Activated B cell treated with CpG ODN at 0.5 μM for 24 hours (primary cell): ENCODE measurements at regions of chr6 and their contacts with region 1.

Region 1: GRCh38 chr6:116100419-116101301 is at the start of gene NT5DC1:
- DNase-seq: peak; percentile 86
- ATAC-seq: peak; percentile 92
- H3K4me3 Mint-ChIP-seq: peak within 1 kb of the TSS; percentile 88
- H3K27ac Mint-ChIP-seq: peak within 1 kb of the TSS; percentile 92
- H3K4me1 Mint-ChIP-seq: peaks cover 52% of the 10 kb centered on the region
- H3K27me3 Mint-ChIP-seq: no peaks in the 10 kb centered on the region
- CTCF ChIP-seq: no peak
- total RNA-seq, gene NT5DC1: 59.9 and 61.6 TPM in 2 replicates

Region 2: DNA sequence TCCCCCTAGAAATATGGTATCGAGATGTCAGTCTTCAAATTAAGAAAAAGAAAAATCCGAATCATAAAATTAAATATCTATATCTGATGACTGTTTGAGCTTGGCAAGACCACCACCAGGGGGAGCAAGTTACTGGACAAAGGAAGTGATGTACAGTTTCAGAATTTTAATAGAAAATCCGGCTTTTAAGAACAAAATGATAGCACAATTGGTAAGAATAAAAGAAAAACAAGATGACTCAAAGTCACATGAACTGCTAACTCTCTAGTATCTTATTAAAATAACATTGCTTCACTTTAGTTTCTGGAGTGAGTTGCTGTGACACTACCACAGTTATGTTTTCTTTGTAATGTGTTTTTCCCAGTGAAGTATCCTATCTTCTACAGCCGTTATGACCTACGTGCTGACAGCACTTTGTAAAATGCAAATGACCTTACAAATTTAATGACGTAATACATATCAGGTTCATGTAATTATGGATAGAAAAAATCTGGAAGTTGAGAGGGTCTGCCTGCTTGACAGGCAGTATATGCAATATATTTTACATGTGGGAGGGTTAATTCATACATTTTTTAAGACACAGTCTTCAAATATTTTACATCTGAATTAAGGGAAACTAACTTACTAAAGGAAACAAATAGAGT is 1352.6 kb before region 1 on chr6:
- CTCF ChIA-PET with region 1: interaction called, 3 read pairs
- POLR2A ChIA-PET with region 1: no interaction called
- intact Hi-C with region 1: loop called (anchors 2 kb)
- DNase-seq: no peak
- ATAC-seq: no peak
- H3K4me3 Mint-ChIP-seq: no peak overlapping the region
- H3K27ac Mint-ChIP-seq: no peak overlapping the region
- H3K4me1 Mint-ChIP-seq: no peaks in the 10 kb centered on the region
- H3K27me3 Mint-ChIP-seq: no peaks in the 10 kb centered on the region
- CTCF ChIP-seq: no peak

Region 3: GRCh38 chr6:116010790-116011401 is 89.8 kb before region 1 on chr6:
- CTCF ChIA-PET with region 1: interaction called, 142 read pairs
- POLR2A ChIA-PET with region 1: interaction called, 29 read pairs
- intact Hi-C with region 1: loop called (anchors 1 kb)
- DNase-seq: peak; percentile 29
- ATAC-seq: peak; percentile 64
- H3K4me3 Mint-ChIP-seq: no peak overlapping the region
- H3K27ac Mint-ChIP-seq: no peak overlapping the region
- H3K4me1 Mint-ChIP-seq: peaks cover 32% of the 10 kb centered on the region
- H3K27me3 Mint-ChIP-seq: peaks cover 2% of the 10 kb centered on the region
- CTCF ChIP-seq: peak; percentile 45

Region 4: DNA sequence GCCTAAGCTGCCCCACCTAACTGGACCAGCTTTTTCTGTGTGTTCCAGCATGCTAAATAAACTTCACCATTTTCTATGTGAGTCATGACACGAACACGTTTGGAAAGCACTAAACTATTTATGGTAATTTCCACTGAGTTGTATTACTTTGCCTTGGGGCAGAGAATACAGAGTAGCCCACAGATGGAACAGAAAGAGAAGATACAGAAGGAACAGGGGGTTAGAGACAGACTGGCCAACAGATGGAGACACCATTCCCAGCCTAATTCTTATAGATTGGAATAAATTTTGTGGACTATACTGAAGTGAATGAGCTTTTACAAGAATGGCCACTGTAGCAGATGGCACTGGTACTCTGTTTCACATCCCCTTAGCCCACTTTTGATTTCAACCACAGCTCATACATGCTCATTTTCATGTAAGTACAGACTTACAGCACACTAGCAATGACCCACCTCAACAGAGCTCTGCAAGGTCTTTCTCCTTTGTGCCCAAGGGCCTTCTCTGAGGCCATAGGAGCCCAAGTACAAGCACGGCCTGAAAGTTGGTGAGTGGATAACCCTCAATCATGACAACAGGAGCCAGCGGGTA is 13.1 kb before region 1 on chr6:
- CTCF ChIA-PET with region 1: interaction called, 29 read pairs
- POLR2A ChIA-PET with region 1: interaction called, 44 read pairs
- intact Hi-C with region 1: loop called (anchors 1 kb)
- DNase-seq: peak; percentile 18
- ATAC-seq: peak; percentile 95
- H3K4me3 Mint-ChIP-seq: peak overlapping the region; percentile 62
- H3K27ac Mint-ChIP-seq: peak overlapping the region; percentile 87
- H3K4me1 Mint-ChIP-seq: peaks cover 34% of the 10 kb centered on the region
- H3K27me3 Mint-ChIP-seq: no peaks in the 10 kb centered on the region
- CTCF ChIP-seq: no peak

Region 5: DNA sequence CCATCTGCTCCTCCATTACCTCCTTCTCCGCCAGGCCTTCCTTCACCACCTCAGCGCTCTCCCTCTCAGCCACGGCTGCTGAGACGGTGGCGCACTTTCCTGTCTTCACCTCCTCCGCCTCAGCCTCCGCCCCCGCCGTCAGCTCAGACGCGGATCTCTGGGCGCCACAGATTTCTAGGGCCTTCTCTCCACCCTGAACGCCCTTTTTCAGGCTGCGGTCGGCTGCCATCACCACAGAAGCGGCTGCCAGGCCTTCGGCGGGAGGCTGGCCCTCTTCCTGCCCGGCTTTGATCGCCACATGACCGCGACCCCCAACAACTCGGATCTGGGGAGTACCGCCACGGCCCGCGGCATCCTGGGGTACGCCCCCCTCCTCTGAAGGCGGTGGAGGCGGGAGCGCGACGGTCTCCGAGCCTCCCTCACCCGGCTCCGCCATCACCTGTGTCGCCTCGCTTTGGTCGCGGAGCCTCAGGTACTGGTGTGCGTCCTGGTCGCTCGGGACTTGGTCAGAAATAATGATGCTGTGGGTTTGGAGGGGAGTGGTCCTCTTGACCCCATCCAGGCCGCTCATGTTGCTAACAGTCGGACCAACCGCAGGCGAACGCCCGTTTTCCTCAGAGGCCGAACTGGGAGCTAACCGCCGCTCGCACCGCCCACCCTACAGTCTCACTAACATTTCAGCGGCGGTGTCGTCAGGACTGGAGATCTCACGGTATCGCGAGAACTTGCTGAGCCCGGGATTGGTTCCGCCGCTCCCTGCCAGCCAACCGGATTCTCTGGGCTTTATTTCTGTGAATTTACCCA is 178.8 kb after region 1 on chr6 and contains the start of gene TSPYL1:
- CTCF ChIA-PET with region 1: no interaction called
- POLR2A ChIA-PET with region 1: interaction called, 4 read pairs
- intact Hi-C with region 1: loop called (anchors 5 kb)
- DNase-seq: peak; percentile 85
- ATAC-seq: peak; percentile 91
- H3K4me3 Mint-ChIP-seq: peak within 1 kb of the TSS; percentile 95
- H3K27ac Mint-ChIP-seq: peak within 1 kb of the TSS; percentile 100
- H3K4me1 Mint-ChIP-seq: peaks cover 71% of the 10 kb centered on the region
- H3K27me3 Mint-ChIP-seq: no peaks in the 10 kb centered on the region
- CTCF ChIP-seq: no peak
- total RNA-seq, gene TSPYL1: 67.4 and 68.4 TPM in 2 replicates

Region 6: DNA sequence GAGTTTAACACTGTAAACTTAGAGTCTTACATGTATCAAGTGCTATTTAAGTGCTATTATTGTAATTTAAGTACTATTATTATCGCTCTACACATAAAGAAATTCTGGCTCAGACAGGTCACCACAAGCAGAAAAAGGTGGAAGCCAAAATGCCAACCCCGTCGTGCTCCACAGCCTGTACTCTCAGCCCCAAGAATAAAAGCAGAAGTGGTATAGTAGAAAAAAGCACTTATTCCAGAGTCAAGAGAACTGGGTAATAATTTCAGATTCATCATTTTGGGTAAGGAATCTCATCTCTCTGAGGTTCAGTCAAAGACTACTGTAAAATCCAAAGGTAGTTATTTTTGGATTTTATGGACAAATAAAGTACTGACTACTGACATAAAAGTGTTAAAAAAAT is 567.0 kb after region 1 on chr6:
- CTCF ChIA-PET with region 1: no interaction called
- POLR2A ChIA-PET with region 1: interaction called, 3 read pairs
- intact Hi-C with region 1: loop called (anchors 5 kb)
- DNase-seq: no peak
- ATAC-seq: peak; percentile 62
- H3K4me3 Mint-ChIP-seq: peak overlapping the region; percentile 100
- H3K27ac Mint-ChIP-seq: peak overlapping the region; percentile 99
- H3K4me1 Mint-ChIP-seq: peaks cover 41% of the 10 kb centered on the region
- H3K27me3 Mint-ChIP-seq: peaks cover 8% of the 10 kb centered on the region
- CTCF ChIP-seq: no peak